Activated T-helper 1 cell treated with anti-CD3 and anti-CD28 coated beads, Interleukin-12 subunit alpha, Interleukin-12 subunit beta, Interleukin-2, Interleukin-4 antibody, amounts not matched to agents 30 ng/mL and 10 ng/mL and 1 ng/mL, durations not matched to agents 14 hours and 24 hours and 36 hours (primary cell): ENCODE measurements at regions of chr4 and their contacts with region 1.

Region 1: GRCh38 chr4:41882625-41883347 is 52.4 kb upstream of the TMEM33 start:
- DNase-seq: peak; percentile 18
- H3K4me3 Mint-ChIP-seq: peak overlapping the region; percentile 31
- H3K27ac Mint-ChIP-seq: peak overlapping the region; percentile 22
- H3K4me1 Mint-ChIP-seq: peaks cover 15% of the 10 kb centered on the region
- H3K27me3 Mint-ChIP-seq: peaks cover 57% of the 10 kb centered on the region

Region 2: DNA sequence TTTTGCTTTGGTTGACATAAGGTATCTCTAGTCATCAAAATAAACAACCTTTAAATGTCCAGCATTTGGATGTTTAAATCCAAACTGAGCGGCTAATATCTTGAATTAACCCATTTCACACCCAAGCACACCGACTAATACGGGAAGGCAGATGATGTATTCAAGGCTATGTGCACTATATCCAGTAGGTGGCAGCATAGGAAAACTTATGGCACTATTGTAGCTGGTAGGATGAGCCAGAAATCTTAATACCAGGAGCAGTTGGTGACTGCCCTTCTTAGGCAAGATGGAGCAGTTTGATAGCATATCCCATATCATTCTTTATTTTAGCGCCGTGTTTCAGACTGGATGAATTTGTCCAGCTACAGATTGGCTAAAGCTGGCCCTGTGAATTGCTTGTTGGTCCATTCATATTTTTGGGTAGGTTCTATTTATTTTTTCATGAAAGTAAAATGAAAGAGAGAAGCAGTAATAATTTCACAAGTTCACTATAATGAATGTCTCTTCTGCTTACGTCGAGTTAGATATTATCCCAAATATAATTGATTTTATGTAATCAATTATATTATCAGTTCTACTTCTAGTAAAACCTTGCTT is 601.6 kb before region 1 on chr4:
- intact Hi-C with region 1: loop called (anchors 1 kb)
- DNase-seq: no peak
- H3K4me3 Mint-ChIP-seq: no peak overlapping the region
- H3K27ac Mint-ChIP-seq: no peak overlapping the region
- H3K4me1 Mint-ChIP-seq: no peaks in the 10 kb centered on the region
- H3K27me3 Mint-ChIP-seq: no peaks in the 10 kb centered on the region

Region 3: DNA sequence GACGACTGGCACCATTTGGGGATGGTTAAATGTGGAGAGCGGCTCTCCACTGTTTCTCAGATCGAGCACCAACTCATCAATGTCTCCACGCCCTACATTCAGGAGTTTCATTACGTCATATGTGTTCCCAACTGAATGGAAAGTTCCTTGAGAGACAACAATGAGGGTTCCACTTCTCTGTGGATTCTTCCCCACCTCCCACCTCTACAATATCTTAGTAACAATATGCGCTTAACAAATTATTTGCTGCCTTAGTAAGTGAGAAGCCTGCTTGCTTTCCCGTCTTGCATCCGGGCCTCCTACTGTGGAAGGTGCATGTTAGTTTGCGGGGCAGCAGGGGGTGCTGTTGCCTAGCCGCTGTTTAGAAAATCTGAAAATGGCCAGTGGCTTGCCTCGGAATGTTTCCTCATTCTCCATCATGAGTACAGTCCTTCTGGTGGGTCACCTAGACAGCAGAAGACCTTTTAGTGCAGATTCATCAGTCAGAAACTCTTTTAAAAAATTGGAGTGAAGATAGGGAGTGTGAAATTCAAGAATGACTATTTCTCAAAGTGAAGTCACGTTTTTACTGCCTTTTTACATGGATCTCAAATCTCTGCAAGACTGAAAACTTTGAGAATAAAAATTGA is 190.0 kb before region 1 on chr4:
- intact Hi-C with region 1: loop called (anchors 1 kb)
- DNase-seq: peak; percentile 5
- H3K4me3 Mint-ChIP-seq: no peak overlapping the region
- H3K27ac Mint-ChIP-seq: no peak overlapping the region
- H3K4me1 Mint-ChIP-seq: no peaks in the 10 kb centered on the region
- H3K27me3 Mint-ChIP-seq: no peaks in the 10 kb centered on the region

Region 4: DNA sequence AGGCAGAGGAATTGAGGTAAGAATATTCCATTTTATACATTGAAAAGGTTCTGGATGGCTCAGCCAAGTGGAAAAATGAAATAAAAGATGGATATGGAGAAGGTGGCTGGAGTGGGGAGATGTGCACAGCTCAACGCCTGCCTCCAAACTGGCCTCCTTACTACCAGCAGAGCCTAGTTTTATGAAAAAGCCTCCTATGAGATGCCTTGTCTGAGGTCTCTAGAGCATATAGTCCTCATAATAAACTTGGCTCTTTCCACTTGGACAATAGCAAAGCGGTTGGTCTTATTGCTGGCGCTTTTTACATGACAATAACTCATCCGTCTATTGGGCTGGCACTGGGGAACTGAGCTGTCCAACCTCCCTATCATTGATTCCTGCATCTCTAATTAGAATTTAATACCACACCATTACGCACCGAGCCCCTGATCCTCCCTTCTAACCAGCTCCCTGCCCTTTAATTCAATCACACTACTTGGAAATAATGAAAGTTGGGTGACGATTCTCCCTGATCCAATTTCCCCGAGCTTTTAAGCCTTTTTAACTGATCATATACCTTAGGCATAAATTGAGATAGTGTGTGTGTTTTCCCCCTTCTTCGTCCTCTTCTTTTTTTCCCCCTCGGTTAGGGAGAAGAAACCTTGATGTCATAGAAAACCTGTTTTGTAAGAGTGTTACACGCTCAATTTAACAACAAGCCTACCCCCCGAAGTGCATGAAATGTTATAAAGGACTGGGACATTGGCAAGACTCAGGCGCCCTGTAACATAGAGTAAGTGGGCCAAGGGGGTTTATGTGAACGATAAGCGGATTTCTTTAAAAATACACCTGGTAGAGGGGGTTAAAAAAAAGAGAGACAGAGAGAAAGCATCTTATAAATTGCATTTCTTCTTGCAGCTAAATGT is 134.0 kb before region 1 on chr4 and contains the start of gene PHOX2B:
- intact Hi-C with region 1: loop called (anchors 1 kb)
- DNase-seq: no peak
- H3K4me3 Mint-ChIP-seq: no peak within 1 kb of the TSS
- H3K27ac Mint-ChIP-seq: no peak within 1 kb of the TSS
- H3K4me1 Mint-ChIP-seq: no peaks in the 10 kb centered on the region
- H3K27me3 Mint-ChIP-seq: peaks cover 86% of the 10 kb centered on the region
- total RNA-seq, gene PHOX2B: not detected in 2 replicates

Region 5: GRCh38 chr4:41865306-41865980 is 17.3 kb before region 1 on chr4:
- intact Hi-C with region 1: loop called (anchors 2 kb)
- DNase-seq: no peak
- H3K4me3 Mint-ChIP-seq: no peak overlapping the region
- H3K27ac Mint-ChIP-seq: no peak overlapping the region
- H3K4me1 Mint-ChIP-seq: peaks cover 5% of the 10 kb centered on the region
- H3K27me3 Mint-ChIP-seq: peaks cover 70% of the 10 kb centered on the region

Region 6: GRCh38 chr4:41913509-41913908 is 30.7 kb after region 1 on chr4:
- intact Hi-C with region 1: no loop called
- DNase-seq: no peak
- H3K4me3 Mint-ChIP-seq: no peak overlapping the region
- H3K27ac Mint-ChIP-seq: no peak overlapping the region
- H3K4me1 Mint-ChIP-seq: peaks cover 6% of the 10 kb centered on the region
- H3K27me3 Mint-ChIP-seq: no peaks in the 10 kb centered on the region

Region 7: DNA sequence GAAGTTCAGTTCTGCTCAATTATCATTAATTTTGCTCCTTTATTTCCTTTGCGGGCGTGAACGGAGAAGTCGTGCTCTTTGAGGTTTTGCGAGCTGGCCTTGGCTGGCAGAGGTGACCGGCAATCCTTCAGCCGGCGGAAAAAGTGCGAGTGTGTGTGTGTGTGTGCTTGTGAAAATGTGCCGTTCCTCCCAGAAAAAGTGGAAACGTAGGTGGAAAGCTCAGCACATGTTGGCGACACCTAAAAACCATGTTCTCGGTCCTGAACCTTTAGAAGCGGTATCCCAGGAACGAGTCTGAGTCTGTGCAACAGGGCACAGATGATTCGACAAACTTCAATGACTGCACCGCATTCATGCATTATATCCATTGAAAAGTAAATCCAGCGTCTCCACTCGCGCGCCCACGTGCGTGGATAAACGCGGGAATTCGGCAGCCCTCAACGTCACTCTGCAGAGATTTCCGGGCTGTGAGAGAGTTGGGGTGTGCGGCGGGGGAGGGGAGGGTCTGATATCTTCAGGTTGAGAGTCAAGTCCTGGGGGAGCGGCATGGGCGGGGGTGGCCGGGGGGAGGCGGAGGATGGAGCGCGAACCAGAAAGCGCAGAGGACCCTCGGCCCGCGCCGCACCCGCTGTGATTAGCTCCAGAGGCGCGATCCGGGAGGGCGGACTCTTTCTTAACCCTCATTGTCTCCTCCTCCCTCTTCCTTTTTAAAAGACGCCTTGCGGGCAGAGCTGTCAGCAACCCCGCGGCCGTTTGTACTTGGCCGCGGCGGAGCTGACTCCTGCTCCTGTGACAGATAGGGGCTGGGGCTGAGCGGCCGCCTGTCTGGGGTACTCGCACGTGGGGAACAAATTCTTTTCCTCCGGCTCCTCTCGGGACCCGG is 514.2 kb after region 1 on chr4 and contains the start of gene SHISA3:
- intact Hi-C with region 1: loop called (anchors 5 kb)
- DNase-seq: no peak
- H3K4me3 Mint-ChIP-seq: peak within 1 kb of the TSS; percentile 80
- H3K27ac Mint-ChIP-seq: peak within 1 kb of the TSS; percentile 40
- H3K4me1 Mint-ChIP-seq: peaks cover 17% of the 10 kb centered on the region
- H3K27me3 Mint-ChIP-seq: peaks cover 57% of the 10 kb centered on the region
- total RNA-seq, gene SHISA3: not detected in 2 replicates